ENCODE measurements at regions of chr15 and their contacts with region 1.

Region 1: DNA sequence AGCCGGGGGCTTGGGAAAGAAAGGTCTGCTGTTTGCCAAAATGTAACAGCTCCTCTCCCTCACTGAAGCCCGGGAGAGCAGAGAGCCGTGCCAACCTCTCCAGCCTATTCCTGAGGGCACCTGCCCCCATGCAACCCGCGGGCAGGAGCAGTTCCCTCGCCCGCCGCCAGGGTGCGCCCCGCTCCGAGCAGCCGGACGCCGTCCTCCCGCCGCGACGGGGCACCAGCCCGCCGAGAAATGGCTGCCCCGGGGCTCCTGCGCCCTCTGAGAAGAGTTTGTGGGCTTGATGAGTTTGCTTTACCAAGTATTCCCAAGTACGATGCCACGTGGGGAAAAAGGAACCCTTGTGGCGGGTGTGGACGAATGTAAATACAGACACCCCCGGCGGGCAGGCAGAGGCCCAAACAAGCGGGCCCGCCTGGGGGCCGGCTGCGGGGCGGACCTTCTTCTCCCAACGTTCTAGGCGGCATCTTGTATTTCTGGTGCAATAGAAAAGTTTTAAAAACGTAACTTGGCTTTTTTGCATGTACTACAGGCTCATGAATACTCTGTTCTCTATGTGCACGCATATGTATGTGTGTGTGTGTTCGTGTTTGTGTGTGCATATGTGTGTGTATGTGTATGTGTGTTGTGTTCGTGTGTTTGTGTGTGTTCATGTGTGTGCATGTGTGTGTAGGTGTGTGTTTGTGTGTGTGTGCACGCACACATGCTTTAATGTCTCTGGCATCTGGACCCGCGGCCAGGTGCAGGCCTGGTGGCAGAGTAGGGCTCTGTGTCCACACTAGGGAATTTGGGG is 162.9 kb downstream of the CHSY1 start:
- DNase-seq: peak; percentile 68 to 84
- ATAC-seq: peak; percentile 65 to 79 (median 72)
- H3K4me3 ChIP-seq: peak overlapping the region in 5 of 10 donors; percentile 7 to 34 (median 25)
- H3K27ac ChIP-seq: peak overlapping the region in 4 of 10 donors; percentile 41 to 81 (median 78)
- H3K4me1 ChIP-seq: peaks cover 20 to 45% (median 30%) of the 10 kb centered on the region in 9 donors
- H3K27me3 ChIP-seq: no peaks in the 10 kb centered on the region
- CTCF ChIP-seq: peak; percentile 97 to 100 (median 99)

Region 2: DNA sequence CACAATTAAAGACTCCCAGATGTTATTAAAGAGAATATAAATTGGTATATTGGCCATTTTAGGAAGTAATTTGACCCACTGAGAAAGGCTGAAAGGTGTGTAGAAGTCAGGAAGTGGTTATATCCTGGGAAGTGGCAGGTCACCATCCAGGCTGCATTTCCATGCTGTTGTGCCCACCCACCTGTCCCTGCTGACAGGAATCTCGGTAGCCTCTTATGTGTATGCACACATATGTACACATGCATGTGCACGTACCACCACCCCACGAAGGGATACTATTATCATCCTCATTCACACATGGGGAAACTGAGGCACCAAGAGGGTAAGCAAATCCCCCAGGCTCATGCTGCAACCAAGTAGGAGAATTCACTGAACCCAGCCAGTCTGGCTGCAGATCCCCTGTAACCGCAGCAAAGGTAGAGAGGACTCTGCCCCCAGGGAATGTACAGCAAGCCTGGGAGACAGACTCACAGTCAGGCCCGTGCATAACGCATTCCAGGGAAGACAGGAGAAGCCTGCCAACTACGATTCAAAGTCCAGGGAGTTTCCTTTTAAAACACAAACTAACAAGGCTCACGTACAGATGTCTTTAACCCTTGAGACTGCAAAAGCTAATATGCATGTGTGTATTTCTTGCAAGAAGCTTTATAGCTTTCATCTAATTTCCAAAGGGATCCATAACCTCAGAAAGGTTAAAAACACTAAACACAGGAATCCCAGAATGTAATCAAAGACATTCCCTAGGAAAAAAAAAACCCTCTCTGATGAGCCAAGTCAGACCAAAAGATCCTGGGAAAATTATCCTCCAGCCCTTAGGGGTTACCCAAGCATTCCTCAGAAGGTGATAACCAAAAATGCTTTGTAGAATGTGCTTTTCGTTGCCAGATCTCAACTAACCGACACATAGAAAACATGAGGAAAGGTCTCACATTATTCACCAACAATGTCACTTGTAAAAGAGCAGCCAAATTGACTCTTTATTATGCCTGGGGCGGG is 876.8 kb before region 1 on chr15:
- intact Hi-C with region 1: no loop called
- DNase-seq: no peak
- ATAC-seq: no peak
- H3K4me3 ChIP-seq: no peak overlapping the region
- H3K27ac ChIP-seq: no peak overlapping the region
- H3K4me1 ChIP-seq: peaks cover 0 to 21% (median 13%) of the 10 kb centered on the region in 9 donors
- H3K27me3 ChIP-seq: no peaks in the 10 kb centered on the region
- CTCF ChIP-seq: no peak

Region 3: DNA sequence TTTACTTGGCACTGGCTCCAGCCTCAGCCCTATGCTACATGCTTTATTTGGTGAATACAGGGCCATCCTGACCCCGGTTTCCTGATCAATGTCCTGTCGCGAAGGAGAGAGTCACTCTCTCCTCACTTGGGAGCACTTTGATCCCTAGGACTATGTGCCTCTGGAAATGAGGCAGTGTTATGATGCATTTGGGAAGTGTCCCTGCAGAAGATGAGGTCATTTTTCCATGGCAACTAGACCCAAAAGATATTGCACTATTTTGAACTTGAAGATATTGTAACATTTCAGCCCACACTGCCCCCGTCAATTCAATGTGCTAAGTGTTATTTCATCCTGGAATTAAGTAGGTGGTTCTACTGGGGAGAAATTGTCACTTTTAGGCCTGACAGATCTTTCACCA is 101.8 kb before region 1 on chr15:
- intact Hi-C with region 1: no loop called
- DNase-seq: no peak
- ATAC-seq: peak in 6 of 8 donors; percentile 47 to 81 (median 70)
- H3K4me3 ChIP-seq: no peak overlapping the region
- H3K27ac ChIP-seq: peak overlapping the region in 3 of 10 donors; percentile 30 to 39 (median 32)
- H3K4me1 ChIP-seq: no peaks in the 10 kb centered on the region
- H3K27me3 ChIP-seq: no peaks in the 10 kb centered on the region
- CTCF ChIP-seq: no peak

Region 4: GRCh38 chr15:101014921-101015841 is 73.8 kb before region 1 on chr15:
- intact Hi-C with region 1: loop called (anchors 2 to 10 kb)
- DNase-seq: peak; percentile 79 to 80
- ATAC-seq: peak; percentile 68 to 80 (median 78)
- H3K4me3 ChIP-seq: no peak overlapping the region
- H3K27ac ChIP-seq: no peak overlapping the region
- H3K4me1 ChIP-seq: peaks cover 0 to 27% (median 4%) of the 10 kb centered on the region in 9 donors
- H3K27me3 ChIP-seq: no peaks in the 10 kb centered on the region
- CTCF ChIP-seq: peak; percentile 81 to 93 (median 89)

Region 5: GRCh38 chr15:101121511-101122090 is 32.6 kb after region 1 on chr15:
- intact Hi-C with region 1: loop called in 1 of 10 experiments (anchors 2 kb)
- DNase-seq: peak; percentile 87
- ATAC-seq: peak; percentile 89 to 95 (median 93)
- H3K4me3 ChIP-seq: peak overlapping the region in 9 of 10 donors; percentile 13 to 50 (median 39)
- H3K27ac ChIP-seq: peak overlapping the region; percentile 5 to 94 (median 72)
- H3K4me1 ChIP-seq: peaks cover 13 to 67% (median 17%) of the 10 kb centered on the region in 9 donors
- H3K27me3 ChIP-seq: no peaks in the 10 kb centered on the region
- CTCF ChIP-seq: peak in 6 of 9 donors; percentile 39 to 67 (median 50)

Region 6: GRCh38 chr15:101225658-101226057 is 136.7 kb after region 1 on chr15:
- intact Hi-C with region 1: no loop called
- DNase-seq: no peak
- ATAC-seq: no peak
- H3K4me3 ChIP-seq: no peak overlapping the region
- H3K27ac ChIP-seq: no peak overlapping the region
- H3K4me1 ChIP-seq: peaks cover 0 to 73% (median 22%) of the 10 kb centered on the region in 9 donors
- H3K27me3 ChIP-seq: no peaks in the 10 kb centered on the region
- CTCF ChIP-seq: no peak

Region 7: DNA sequence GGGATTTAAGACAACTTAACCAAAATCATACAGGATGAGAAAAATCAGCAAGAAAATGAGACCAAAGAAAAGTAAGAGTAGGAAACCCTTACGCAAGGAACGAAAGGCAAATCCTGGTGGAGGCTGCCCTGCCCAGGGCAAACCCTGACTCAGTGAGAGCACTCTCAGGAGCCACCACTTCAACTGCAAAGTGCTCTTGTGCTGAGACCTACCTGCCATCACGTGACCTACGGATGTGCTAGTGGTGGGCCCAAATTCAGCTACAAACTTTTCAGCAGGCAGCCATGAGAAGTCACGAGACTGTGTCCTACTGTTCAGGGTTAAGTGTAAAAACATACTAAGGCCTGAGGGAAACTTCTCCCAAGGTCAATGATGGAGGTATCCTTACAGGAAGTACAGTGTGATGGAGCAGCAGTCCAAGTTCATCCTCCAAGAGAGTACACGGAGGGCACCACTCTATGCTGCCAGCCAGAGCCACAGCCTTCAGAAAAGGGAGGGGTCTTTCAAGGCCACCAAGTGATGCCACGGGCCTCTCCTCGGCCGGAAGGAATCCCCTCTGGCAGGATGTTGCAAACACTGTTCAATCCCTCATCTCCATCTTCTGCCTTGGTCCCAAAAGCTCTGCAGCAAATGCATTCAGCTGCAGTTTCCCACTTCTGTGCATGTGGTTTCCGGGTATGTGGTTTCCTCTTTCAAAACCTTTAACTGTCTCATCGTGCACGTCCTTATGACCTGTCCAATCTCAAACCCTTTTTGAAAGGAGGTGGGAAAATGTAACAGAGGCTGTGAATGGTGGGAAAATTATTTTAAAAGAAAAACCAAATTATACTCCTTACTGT is 153.4 kb after region 1 on chr15:
- intact Hi-C with region 1: loop called in 1 of 10 experiments (anchors 5 kb)
- DNase-seq: peak in 1 of 2 donors; percentile 34
- ATAC-seq: peak in 7 of 8 donors; percentile 37 to 70 (median 45)
- H3K4me3 ChIP-seq: peak overlapping the region in 2 of 10 donors; percentile 7 to 30
- H3K27ac ChIP-seq: peak overlapping the region in 8 of 10 donors; percentile 4 to 80 (median 46)
- H3K4me1 ChIP-seq: peaks cover 10 to 100% (median 75%) of the 10 kb centered on the region in 9 donors
- H3K27me3 ChIP-seq: no peaks in the 10 kb centered on the region
- CTCF ChIP-seq: no peak

Region 8: GRCh38 chr15:101258238-101259144 is 169.5 kb after region 1 on chr15:
- intact Hi-C with region 1: loop called (anchors 1 to 5 kb)
- DNase-seq: peak in 1 of 2 donors; percentile 75
- ATAC-seq: peak in 7 of 8 donors; percentile 43 to 78 (median 67)
- H3K4me3 ChIP-seq: no peak overlapping the region
- H3K27ac ChIP-seq: no peak overlapping the region
- H3K4me1 ChIP-seq: peaks cover 0 to 26% (median 21%) of the 10 kb centered on the region in 9 donors
- H3K27me3 ChIP-seq: no peaks in the 10 kb centered on the region
- CTCF ChIP-seq: peak; percentile 71 to 97 (median 90)

Region 9: DNA sequence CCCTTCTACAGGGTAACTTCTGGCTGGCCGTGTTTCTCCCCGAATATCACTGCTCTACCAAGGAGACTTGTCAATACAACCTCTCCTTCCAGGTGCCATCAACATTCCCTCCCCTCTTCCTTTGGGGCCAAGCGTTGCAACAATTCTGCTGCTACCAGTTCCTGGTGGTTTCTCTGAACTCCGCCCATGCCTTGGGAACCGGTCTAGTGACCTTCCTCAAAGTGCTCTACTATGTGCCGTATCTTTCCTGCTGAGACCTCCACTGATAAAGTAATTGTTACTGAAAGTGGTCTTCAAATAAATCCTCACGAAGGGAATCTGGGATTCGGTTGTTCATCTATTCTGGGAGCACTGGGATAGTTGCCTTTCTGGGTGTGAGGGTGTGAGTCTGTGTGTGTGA is 374.3 kb after region 1 on chr15:
- intact Hi-C with region 1: no loop called
- DNase-seq: no peak
- ATAC-seq: no peak
- H3K4me3 ChIP-seq: no peak overlapping the region
- H3K27ac ChIP-seq: no peak overlapping the region
- H3K4me1 ChIP-seq: peaks cover 0 to 11% (median 7%) of the 10 kb centered on the region in 9 donors
- H3K27me3 ChIP-seq: peaks cover 0 to 3% (median 0%) of the 10 kb centered on the region in 7 donors
- CTCF ChIP-seq: no peak